Mammary epithelial cell (primary cell): ENCODE measurements at regions of chr1 and their contacts with region 1.

Region 1: GRCh38 chr1:181117638-181118449 is 29.3 kb downstream of the IER5 start:
- DNase-seq: peak; percentile 96
- H3K4me3 ChIP-seq: no peak overlapping the region
- H3K27ac ChIP-seq: peak overlapping the region; percentile 62
- H3K4me1 ChIP-seq: peaks cover 62% of the 10 kb centered on the region
- H3K27me3 ChIP-seq: no peaks in the 10 kb centered on the region
- CTCF ChIP-seq: no peak

Region 2: DNA sequence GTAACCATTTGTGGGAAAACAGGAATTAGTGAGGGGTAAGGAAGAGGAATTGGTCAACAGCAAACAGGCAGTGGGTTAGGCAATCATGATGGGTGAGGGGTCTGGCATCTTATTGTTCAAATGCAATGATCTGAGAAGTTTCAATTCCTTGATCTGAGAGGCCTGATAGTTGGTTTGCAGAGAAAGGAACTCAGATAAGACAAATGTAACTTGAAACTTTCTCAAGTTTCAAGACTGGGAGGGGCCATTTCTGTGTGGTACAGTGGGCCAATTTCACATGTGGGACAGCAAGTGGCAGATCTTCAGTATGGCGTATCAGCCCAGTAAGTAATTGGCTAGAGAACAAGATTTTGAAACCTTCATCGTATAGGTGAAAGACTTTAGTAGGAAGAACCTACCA is 383.5 kb before region 1 on chr1:
- CTCF ChIA-PET with region 1: no interaction called
- dilution Hi-C with region 1: no loop called
- in situ Hi-C with region 1: no loop called
- intact Hi-C with region 1: no loop called
- DNase-seq: peak; percentile 1
- H3K4me3 ChIP-seq: no peak overlapping the region
- H3K27ac ChIP-seq: no peak overlapping the region
- H3K4me1 ChIP-seq: no peaks in the 10 kb centered on the region
- H3K27me3 ChIP-seq: no peaks in the 10 kb centered on the region
- CTCF ChIP-seq: no peak

Region 3: DNA sequence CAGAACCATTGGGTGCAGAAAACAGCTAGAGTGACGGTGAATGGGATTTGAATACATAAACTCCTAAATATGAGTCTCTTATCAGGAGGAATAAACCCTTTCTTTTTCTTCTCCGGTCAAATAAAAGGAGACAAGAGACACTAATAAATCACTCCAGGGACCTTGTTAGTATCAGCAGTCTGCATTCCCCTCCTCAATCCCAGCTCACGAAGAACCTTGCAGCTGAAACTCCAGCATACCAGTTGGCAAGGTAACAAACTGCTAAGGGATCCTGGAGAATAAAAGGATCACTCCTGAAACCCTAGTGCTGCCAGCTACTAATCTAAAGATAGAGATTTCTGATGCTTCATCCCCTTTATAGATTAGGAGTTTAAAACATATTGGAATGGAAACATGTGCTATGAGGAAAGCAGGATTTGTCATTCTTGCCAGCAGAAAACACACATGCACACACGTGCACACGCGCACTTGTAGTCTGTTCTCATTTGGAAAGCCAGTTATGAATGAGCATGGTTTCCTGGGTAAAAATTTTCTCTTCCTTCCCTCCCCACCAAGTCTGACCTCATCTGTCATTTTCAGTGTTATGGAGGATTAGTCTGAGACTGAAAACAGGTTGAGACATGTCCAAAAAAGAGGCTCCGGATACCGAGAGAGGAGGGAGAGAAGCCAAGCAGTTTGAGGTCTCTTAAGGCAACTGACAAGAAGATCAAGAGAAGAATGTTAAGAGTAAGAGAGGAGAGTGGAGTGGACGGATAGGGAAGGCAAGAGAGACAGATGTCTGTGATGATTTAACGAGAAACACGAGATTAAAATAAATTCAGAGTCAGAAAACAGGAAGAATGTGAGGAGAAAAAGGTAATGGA is 18.5 kb before region 1 on chr1:
- CTCF ChIA-PET with region 1: no interaction called
- dilution Hi-C with region 1: no loop called
- in situ Hi-C with region 1: no loop called
- intact Hi-C with region 1: loop called (anchors 2 kb)
- DNase-seq: peak; percentile 96
- H3K4me3 ChIP-seq: no peak overlapping the region
- H3K27ac ChIP-seq: peak overlapping the region; percentile 73
- H3K4me1 ChIP-seq: peaks cover 68% of the 10 kb centered on the region
- H3K27me3 ChIP-seq: no peaks in the 10 kb centered on the region
- CTCF ChIP-seq: no peak